IMR-90 (cell line): ENCODE measurements at regions of chr5 and their contacts with region 1.

Region 1: DNA sequence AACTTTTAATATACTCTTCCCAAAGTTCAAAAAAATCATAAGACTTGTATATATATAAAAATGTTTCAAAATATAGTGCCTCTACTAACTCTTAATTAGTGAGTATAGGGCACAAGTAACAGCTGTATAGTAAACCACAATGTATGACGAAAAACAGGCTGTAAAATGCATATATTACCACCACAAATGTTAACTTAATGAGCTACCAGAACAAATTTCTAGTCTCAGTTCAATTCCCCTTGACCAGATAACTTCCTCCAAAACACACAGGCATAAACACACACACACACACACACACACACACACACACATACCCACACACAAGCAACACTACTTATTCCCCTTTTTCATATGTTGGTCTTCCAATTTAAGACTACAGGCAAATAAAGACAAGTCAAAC is 78.8 kb downstream of the FBXL17 start:
- DNase-seq: no peak
- ATAC-seq: no peak
- H3K4me3 ChIP-seq: no peak overlapping the region
- H3K27ac ChIP-seq: no peak overlapping the region
- H3K4me1 ChIP-seq: no peaks in the 10 kb centered on the region
- H3K27me3 ChIP-seq: no peaks in the 10 kb centered on the region
- CTCF ChIP-seq: no peak
- POLR2A ChIP-seq: no peak
- RAD21 ChIP-seq: no peak

Region 2: DNA sequence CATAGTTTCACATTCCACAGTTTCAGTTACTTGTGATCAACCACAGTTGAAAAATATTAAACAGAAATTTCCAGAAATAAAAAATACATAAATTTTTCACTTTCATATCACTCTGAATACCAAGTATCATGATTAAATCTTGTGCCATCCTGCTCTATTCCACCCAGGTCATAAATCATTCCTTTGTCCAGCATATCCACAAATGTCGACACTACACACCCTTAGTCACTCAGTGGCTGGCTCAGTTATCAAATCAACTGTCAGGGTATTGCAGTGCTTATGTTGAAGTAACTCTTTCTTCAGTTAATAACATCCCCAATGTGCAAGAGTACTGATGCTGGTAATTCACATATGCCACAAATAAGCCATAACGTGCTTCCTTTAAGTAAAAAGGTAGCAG is 36.9 kb before region 1 on chr5:
- CTCF ChIA-PET with region 1: interaction called, 4 read pairs
- POLR2A ChIA-PET with region 1: no interaction called
- dilution Hi-C with region 1: no loop called
- in situ Hi-C with region 1: no loop called
- intact Hi-C with region 1: loop called (anchors 5 kb)
- DNase-seq: peak; percentile 11
- ATAC-seq: no peak
- H3K4me3 ChIP-seq: no peak overlapping the region
- H3K27ac ChIP-seq: no peak overlapping the region
- H3K4me1 ChIP-seq: no peaks in the 10 kb centered on the region
- H3K27me3 ChIP-seq: no peaks in the 10 kb centered on the region
- CTCF ChIP-seq: no peak
- POLR2A ChIP-seq: no peak
- RAD21 ChIP-seq: no peak